IMR-90 (cell line): ENCODE measurements at regions of chr11 and their contacts with region 1.

Region 1: GRCh38 chr11:122578168-122578825 is 77.2 kb upstream of the UBASH3B start:
- DNase-seq: no peak
- ATAC-seq: no peak
- H3K4me3 ChIP-seq: no peak overlapping the region
- H3K27ac ChIP-seq: no peak overlapping the region
- H3K4me1 ChIP-seq: peaks cover 2% of the 10 kb centered on the region; the same call in 1 of the 2 replicates
- H3K27me3 ChIP-seq: no peaks in the 10 kb centered on the region; the same call in 1 of the 2 replicates
- CTCF ChIP-seq: peak; percentile 5; the same call in 1 of the 2 replicates
- POLR2A ChIP-seq: no peak
- RAD21 ChIP-seq: no peak

Region 2: GRCh38 chr11:122628810-122629555 is 50.7 kb after region 1 on chr11:
- CTCF ChIA-PET with region 1: interaction called, 3 read pairs
- POLR2A ChIA-PET with region 1: no interaction called
- dilution Hi-C with region 1: no loop called
- in situ Hi-C with region 1: no loop called
- intact Hi-C with region 1: loop called (anchors 1 kb)
- DNase-seq: peak; percentile 77
- ATAC-seq: peak; percentile 95
- H3K4me3 ChIP-seq: no peak overlapping the region
- H3K27ac ChIP-seq: no peak overlapping the region
- H3K4me1 ChIP-seq: peaks cover 6% of the 10 kb centered on the region
- H3K27me3 ChIP-seq: peaks cover 9% of the 10 kb centered on the region
- CTCF ChIP-seq: peak; percentile 93
- POLR2A ChIP-seq: no peak
- RAD21 ChIP-seq: peak; percentile 88

Region 3: GRCh38 chr11:123054301-123055065 is 476.2 kb after region 1 on chr11:
- CTCF ChIA-PET with region 1: no interaction called
- POLR2A ChIA-PET with region 1: interaction called, 12 read pairs
- dilution Hi-C with region 1: no loop called
- in situ Hi-C with region 1: no loop called
- intact Hi-C with region 1: no loop called
- DNase-seq: peak; percentile 73
- ATAC-seq: peak; percentile 76
- H3K4me3 ChIP-seq: no peak overlapping the region
- H3K27ac ChIP-seq: no peak overlapping the region
- H3K4me1 ChIP-seq: no peaks in the 10 kb centered on the region; the same call in 1 of the 2 replicates
- H3K27me3 ChIP-seq: no peaks in the 10 kb centered on the region
- CTCF ChIP-seq: peak; percentile 66
- POLR2A ChIP-seq: peak; percentile 28
- RAD21 ChIP-seq: peak; percentile 57

Region 4: GRCh38 chr11:124415356-124415923 is 1837.1 kb after region 1 on chr11:
- CTCF ChIA-PET with region 1: no interaction called
- POLR2A ChIA-PET with region 1: no interaction called
- dilution Hi-C with region 1: no loop called
- in situ Hi-C with region 1: no loop called
- intact Hi-C with region 1: no loop called
- DNase-seq: peak; percentile 69
- ATAC-seq: peak; percentile 46; the same call in 1 of the 2 replicates
- H3K4me3 ChIP-seq: no peak overlapping the region
- H3K27ac ChIP-seq: no peak overlapping the region
- H3K4me1 ChIP-seq: no peaks in the 10 kb centered on the region
- H3K27me3 ChIP-seq: peaks cover 14% of the 10 kb centered on the region
- CTCF ChIP-seq: peak; percentile 78
- POLR2A ChIP-seq: no peak
- RAD21 ChIP-seq: peak; percentile 70